GM10248 (cell line): ENCODE measurements at regions of chr16 and their contacts with region 1.

Region 1: DNA sequence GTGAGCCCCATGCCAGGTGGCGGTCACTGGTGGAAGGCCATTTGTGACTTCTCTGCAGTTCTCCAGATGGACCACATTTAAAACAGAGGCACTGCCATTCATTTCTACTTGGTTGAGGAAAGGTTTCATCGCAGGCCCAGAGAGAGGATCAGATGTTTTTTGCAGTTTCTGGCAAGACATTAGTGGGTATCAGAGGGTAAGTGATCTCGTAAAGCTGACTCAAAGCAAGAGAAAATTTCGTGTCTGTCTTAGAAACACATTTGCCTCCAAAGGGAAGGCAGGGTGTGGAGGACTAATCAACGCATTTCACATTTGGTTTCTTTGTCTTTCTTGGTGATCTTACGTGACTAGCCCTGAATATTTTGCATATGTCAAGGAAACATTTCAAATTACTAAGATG is 81.8 kb downstream of the PRKCB start:
- DNase-seq: peak; percentile 44
- CTCF ChIP-seq: no peak

Region 2: DNA sequence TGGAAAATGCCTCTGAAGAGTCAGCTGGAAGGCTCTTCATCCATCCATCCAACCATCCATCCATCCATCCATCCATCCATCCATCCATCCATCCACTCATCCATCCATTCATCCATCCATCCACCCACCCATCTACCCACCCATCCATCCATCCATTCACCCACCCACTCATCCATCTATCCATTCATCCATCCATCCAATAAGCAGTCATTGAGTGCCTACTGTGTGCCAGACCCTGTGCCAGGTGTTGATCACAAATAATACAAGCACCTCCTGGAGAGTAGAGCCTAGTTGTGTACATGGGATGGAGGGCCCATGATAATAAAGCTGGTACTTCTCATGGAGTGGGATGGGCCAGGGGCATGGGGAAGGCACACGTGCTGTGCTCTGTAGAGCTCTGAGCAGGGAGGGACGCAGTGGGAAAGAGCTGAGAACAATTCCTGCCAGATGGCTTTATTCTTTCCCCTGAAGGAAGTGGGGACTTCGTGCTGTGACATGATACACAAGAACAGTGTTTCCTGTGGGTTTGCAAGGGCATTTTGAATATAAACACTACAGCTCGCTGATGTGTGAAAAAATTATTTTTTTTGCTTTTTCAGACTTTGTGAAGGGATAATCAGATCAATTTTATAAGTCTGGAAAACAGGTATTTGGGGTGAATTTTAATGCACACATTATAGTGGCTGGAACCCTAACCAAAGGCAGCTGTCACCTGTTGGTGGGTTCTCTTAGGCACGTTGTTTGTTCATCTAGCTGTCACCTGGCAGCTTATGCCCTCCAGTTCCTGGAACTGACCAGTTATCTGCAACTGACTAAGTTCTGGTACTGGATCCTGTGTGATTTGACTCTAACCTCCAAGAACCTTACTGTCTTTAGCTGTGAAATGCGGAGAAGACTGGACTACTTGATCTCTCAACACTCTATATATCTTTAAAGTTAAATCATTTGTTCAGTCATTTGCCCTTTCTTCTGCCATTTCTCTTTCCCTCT is 20.5 kb before region 1 on chr16:
- CTCF ChIA-PET with region 1: interaction called, 26 read pairs
- POLR2A ChIA-PET with region 1: no interaction called
- DNase-seq: no peak
- CTCF ChIP-seq: no peak

Region 3: GRCh38 chr16:23905027-23905426 is 12.6 kb before region 1 on chr16:
- CTCF ChIA-PET with region 1: interaction called, 17 read pairs
- POLR2A ChIA-PET with region 1: no interaction called
- DNase-seq: no peak
- CTCF ChIP-seq: no peak